Activated T-helper 1 cell treated with anti-CD3 and anti-CD28 coated beads, Interleukin-12 subunit alpha, Interleukin-12 subunit beta, Interleukin-2, Interleukin-4 antibody, amounts not matched to agents 30 ng/mL and 10 ng/mL and 1 ng/mL, durations not matched to agents 14 hours and 24 hours and 36 hours (primary cell): ENCODE measurements at regions of chrX and their contacts with region 1.

Region 1: GRCh38 chrX:48737213-48737938 is 24.2 kb upstream of the GLOD5 start:
- DNase-seq: peak; percentile 85
- H3K4me3 Mint-ChIP-seq: peak overlapping the region; percentile 98
- H3K27ac Mint-ChIP-seq: peak overlapping the region; percentile 98
- H3K4me1 Mint-ChIP-seq: peaks cover 23% of the 10 kb centered on the region
- H3K27me3 Mint-ChIP-seq: no peaks in the 10 kb centered on the region

Region 2: GRCh38 chrX:48648336-48648751 is 89.0 kb before region 1 on chrX:
- intact Hi-C with region 1: no loop called
- DNase-seq: no peak
- H3K4me3 Mint-ChIP-seq: no peak overlapping the region
- H3K27ac Mint-ChIP-seq: no peak overlapping the region
- H3K4me1 Mint-ChIP-seq: peaks cover 5% of the 10 kb centered on the region
- H3K27me3 Mint-ChIP-seq: no peaks in the 10 kb centered on the region

Region 3: DNA sequence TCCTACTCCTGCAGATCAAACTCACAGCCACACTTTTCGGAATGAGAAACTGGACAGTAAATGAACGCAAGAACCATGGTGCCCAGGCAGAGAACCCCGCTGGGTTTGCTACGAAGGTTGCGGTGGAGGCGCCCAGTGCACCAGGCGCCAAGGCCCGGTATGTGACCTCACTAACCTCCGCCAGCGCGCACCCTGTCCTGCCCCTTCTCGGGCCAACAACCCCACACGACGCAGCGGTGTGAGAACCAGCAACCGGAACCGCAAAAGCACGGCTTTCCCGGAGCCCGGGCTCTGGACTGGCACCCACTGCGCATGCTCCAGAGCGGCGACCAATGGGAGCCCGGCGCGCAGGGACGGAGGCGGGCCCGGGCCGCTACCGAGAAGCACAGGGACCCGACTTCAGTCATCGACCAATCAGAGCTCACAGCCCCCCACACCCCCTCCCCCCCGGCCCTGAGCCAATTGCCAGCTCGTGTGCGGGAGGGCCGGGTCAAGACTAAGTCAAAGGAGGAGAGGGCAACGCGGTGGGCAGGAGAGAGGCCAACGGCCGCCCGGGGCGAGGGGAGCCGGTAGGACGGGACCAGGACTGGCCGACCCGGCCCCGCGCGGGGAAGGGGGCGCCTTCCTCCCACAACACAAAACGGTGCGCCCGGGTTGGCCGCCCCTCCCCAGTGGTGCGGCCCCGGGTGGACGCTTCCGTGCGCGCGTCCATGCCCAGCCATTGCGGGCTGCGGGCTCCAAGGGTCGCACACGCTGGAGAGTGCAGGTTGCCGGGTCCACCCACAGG is 61.1 kb before region 1 on chrX:
- intact Hi-C with region 1: loop called (anchors 1 kb)
- DNase-seq: peak; percentile 87
- H3K4me3 Mint-ChIP-seq: peak overlapping the region; percentile 86
- H3K27ac Mint-ChIP-seq: peak overlapping the region; percentile 88
- H3K4me1 Mint-ChIP-seq: peaks cover 20% of the 10 kb centered on the region
- H3K27me3 Mint-ChIP-seq: no peaks in the 10 kb centered on the region

Region 4: DNA sequence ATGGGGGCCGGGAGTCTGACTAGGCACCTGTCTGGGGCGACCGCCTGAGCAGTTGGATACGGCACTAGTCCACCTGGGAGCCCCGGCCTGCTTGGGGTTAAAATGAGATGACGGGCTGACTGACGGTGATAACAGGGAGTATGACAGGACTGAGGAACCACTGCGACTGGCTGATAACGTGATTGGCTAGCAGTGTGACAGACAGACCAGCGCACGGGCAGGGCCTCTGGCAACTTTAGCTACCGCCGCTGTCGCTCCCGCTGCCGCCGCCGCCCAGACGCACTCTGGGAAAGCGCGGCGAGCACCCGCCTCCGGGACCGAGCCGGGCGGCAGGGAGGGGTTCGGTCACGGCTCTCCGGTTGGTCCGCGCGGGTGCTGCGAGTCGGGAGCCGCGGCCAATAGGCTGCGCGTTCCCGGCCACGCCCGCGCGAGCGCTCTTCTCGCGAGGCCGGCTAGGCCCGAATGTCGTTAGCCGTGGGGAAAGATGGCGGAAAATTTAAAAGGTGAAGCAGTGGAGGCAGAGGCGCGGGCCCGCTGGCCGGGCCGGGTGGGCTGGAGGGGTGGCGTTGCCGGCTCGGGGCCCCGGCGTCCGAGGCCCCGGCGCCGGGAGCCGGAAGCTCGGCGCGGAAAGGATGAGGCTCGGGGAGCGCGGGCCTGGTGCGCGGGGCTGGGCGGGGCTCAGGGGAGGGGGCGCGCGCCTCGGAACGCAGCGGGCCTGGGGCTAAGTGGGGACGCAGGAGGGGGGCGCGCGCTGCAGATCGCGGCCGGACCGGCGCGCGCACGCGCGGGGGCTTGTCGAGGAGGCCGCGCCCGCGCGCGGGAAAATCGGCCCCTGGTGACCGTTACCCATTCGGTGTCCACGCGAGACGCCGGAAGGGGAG is 40.8 kb before region 1 on chrX and contains the start of gene SUV39H1:
- intact Hi-C with region 1: loop called (anchors 1 kb)
- DNase-seq: peak; percentile 85
- H3K4me3 Mint-ChIP-seq: peak within 1 kb of the TSS; percentile 93
- H3K27ac Mint-ChIP-seq: peak within 1 kb of the TSS; percentile 91
- H3K4me1 Mint-ChIP-seq: peaks cover 35% of the 10 kb centered on the region
- H3K27me3 Mint-ChIP-seq: peaks cover 2% of the 10 kb centered on the region
- total RNA-seq, gene SUV39H1: 27.5 and 27.7 TPM in 2 replicates

Region 5: DNA sequence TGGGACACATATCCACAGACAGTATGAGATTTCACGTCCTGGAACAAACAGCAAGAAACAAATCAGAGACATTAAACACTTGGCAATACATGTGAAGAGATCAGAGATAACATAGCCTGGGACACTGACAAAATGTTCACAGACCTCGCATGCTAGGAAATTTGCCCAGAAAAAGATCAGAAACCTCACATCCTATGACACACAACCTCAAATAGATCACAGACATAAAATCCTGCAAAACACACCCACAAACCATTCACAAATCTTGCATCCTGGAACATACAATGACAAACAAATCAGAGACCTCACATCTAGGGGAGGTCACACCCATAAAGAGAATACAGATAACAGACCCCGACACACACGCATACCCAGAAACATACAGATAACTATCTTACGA is 22.8 kb before region 1 on chrX:
- intact Hi-C with region 1: loop called (anchors 1 kb)
- DNase-seq: no peak
- H3K4me3 Mint-ChIP-seq: peak overlapping the region; percentile 50
- H3K27ac Mint-ChIP-seq: peak overlapping the region; percentile 84
- H3K4me1 Mint-ChIP-seq: peaks cover 75% of the 10 kb centered on the region
- H3K27me3 Mint-ChIP-seq: no peaks in the 10 kb centered on the region

Region 6: GRCh38 chrX:48751343-48751742 is 14.0 kb after region 1 on chrX:
- intact Hi-C with region 1: loop called (anchors 1 kb)
- DNase-seq: peak; percentile 0
- H3K4me3 Mint-ChIP-seq: no peak overlapping the region
- H3K27ac Mint-ChIP-seq: peak overlapping the region; percentile 46
- H3K4me1 Mint-ChIP-seq: peaks cover 7% of the 10 kb centered on the region
- H3K27me3 Mint-ChIP-seq: no peaks in the 10 kb centered on the region

Region 7: DNA sequence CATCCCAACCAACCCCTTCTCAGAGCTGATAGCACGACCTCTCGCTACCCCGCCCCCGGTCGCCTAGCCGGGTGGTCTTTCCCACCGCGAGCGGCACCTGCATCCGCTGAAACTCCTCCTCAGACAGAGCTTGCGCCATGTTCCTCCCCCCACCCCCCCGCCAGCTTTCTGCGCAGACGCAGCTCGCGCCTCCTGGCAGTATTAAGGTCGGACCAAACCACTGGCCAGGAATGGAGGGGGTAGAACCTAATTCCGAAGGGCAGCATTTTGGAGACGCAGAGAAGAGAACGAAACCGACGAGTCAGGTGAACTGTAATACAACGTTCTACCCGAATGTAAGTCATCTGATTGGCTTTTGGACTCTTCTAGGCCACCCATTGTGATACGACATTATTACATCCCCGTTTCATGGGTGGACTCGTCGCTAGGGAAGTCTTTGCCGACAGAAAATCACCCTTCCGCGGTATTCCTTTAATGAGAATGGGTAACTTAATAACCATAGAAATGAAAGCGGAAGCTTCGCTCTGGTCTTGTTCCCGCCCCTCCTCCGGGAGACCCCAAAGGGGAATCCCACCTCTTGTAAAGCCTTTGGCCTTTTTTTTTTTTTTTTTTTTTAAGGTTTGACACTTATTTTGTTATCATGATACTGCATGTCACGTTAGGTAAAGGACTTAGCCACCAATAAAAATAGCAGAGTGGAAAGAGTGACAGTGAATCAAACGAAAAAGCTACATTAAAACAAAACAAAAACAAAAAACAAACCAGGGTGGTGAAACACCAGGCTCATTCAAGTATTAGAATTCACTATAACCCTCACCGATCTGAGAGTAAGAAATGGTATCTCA is 264.9 kb after region 1 on chrX and contains the start of gene GRIPAP1:
- intact Hi-C with region 1: loop called (anchors 1 kb)
- DNase-seq: peak; percentile 68
- H3K4me3 Mint-ChIP-seq: peak within 1 kb of the TSS; percentile 99
- H3K27ac Mint-ChIP-seq: peak within 1 kb of the TSS; percentile 96
- H3K4me1 Mint-ChIP-seq: peaks cover 35% of the 10 kb centered on the region
- H3K27me3 Mint-ChIP-seq: no peaks in the 10 kb centered on the region
- total RNA-seq, gene GRIPAP1: 85.8 and 89.2 TPM in 2 replicates